ENCODE measurements at regions of chr22 and their contacts with region 1.

Region 1: DNA sequence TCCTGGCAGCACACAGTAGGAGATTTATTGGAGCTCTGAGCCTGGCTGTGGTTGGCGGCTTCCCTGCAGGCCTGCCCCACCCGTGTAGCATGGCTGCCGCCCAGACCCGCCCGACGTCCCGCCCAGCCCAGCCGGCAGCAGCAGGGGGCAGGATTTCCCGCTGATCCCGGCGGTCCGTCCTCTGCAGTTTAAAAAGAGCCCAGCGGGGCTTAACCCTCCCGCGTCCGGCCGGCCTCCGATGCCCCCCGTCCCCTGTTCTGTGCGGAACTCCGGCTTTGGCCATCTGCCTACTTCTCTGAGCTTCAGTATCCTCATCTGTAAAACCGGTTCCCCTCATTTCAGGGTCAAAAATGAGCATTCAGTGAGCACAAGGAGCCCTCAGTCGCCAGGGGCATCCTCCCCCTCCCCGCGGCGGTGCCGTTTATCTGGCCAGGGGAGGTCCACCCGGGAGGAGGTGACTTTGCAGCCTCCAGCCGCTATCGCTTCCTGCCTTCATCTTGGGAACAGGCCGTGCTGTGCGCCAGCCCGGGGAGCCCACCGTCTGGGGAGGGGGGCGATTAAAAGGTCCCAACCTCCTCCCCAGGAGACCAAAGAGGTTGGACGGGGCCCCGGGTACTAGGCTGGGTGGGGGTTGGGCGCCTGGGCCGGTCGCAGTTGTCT is at the start of gene GAS2L1:
- DNase-seq: peak; percentile 70 to 97 (median 80)

Region 2: GRCh38 chr22:29267858-29268417 is 38.4 kb before region 1 on chr22 and contains the starts of genes EWSR1 and RHBDD3:
- intact Hi-C with region 1: loop called (anchors 5 kb)
- DNase-seq: peak; percentile 89 to 99 (median 94)

Region 3: GRCh38 chr22:29320546-29320945 is 14.2 kb after region 1 on chr22:
- intact Hi-C with region 1: no loop called
- DNase-seq: no peak

Region 4: DNA sequence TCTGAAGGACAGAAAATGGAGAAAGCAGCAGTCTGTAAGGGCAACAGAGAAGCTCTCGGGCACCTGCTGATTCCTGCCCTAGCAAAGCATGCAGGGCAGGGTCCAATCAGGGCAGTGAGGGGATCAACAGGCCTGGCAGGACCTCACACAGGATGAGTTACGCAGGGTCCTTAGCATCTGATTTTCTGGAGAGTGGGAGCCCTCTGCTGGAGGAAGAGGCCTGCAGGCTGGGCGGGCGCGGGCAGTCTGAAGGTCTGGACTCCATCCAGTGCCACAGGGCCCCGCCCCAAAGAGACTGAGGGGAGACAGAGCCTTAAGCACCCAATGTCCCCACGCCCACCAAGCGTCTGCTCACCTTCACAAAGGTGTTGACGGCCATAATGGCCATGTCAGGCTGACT is 53.2 kb after region 1 on chr22:
- intact Hi-C with region 1: loop called (anchors 5 kb)
- DNase-seq: peak; percentile 33 to 95 (median 68)

Region 5: GRCh38 chr22:29387921-29388758 is 81.8 kb after region 1 on chr22 and contains the start of gene AP1B1:
- intact Hi-C with region 1: loop called (anchors 10 kb)
- DNase-seq: peak; percentile 85 to 99 (median 93)